Thyroid gland (tissue), 4 donors: ENCODE measurements at regions of chr9 and their contacts with region 1.

Region 1: DNA sequence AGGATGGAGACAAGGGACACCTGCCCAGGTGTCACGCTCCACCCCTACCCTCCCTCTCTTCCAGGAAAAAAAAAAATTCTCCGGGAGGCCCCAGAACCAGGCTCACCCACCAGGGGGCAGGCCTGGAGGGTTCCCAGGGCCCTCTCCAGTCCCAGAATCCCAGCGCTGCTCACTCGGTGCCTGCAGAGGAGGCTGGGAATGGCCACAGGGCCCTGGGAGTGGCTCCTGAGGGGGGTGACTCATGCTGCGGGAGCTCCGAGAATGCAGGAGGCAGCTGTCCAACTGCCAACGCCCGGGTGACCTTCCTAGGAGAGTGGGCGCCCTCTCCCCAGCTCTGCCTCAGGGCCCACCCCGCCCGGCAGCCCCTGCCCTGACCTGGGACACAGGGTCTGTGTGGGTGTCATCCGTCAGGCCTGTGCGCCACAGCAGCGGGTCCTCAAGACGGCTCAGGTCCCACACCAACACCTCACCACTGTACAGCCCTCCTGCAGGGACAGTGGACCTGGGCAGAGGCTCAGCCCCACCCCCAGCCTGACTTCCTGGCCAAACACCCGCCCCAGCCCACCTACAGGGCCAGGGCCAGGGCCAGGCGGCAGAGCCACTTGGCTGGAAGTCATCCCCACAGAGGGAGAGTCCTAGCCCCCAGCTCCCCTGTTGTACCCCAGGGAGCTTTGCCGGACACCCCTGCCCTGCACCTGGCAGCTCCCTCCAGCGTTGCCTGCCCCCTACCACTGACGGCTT is 21.2 kb downstream of the DYNC2I2 start:
- DNase-seq: peak; percentile 99
- H3K4me3 ChIP-seq: no peak overlapping the region
- H3K27ac ChIP-seq: peak overlapping the region; percentile 96 to 99 (median 98)
- H3K4me1 ChIP-seq: peaks cover 27 to 33% of the 10 kb centered on the region in 2 donors
- H3K27me3 ChIP-seq: no peaks in the 10 kb centered on the region
- CTCF ChIP-seq: peak; percentile 64 to 97 (median 88)
- POLR2A ChIP-seq: peak in 1 of 2 donors; percentile 54

Region 2: GRCh38 chr9:128484686-128485413 is 150.6 kb before region 1 on chr9:
- intact Hi-C with region 1: no loop called
- DNase-seq: no peak
- H3K4me3 ChIP-seq: no peak overlapping the region
- H3K27ac ChIP-seq: no peak overlapping the region
- H3K4me1 ChIP-seq: no peaks in the 10 kb centered on the region
- H3K27me3 ChIP-seq: no peaks in the 10 kb centered on the region
- CTCF ChIP-seq: no peak
- POLR2A ChIP-seq: no peak

Region 3: DNA sequence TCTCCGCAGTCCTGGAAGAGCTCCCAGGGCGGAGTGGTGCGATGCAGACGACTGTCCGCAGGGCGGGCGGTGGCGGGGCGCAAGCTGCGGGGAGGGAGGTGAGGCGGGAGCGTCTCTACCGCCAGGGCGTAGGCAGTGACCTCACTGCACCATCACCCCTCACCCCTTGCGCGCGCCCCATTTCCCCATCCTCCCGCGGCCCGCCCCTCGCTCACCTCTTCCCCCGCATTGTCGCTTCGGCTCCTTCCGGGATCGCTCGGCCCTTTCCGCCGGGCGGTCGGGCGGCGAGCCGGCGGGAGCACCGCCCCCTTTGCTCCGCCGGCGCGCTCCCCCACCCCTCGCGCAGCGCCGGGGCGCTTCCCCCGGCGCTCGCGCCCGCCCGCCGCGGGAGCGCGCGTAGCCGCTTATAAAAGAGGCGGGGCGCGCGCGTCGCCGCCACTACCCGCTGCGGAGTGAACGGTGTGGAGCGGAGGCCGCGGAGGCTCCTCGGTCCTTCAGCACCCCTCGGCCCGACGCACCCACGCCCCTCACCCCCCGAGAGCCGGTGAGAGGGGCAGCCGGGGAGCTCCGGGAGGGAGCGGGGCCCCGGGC is 83.2 kb before region 1 on chr9 and contains the start of gene SPTAN1:
- intact Hi-C with region 1: no loop called
- DNase-seq: peak; percentile 83 to 87
- H3K4me3 ChIP-seq: peak within 1 kb of the TSS; percentile 32 to 95 (median 83)
- H3K27ac ChIP-seq: peak within 1 kb of the TSS; percentile 93 to 99 (median 99)
- H3K4me1 ChIP-seq: peaks cover 49 to 56% of the 10 kb centered on the region in 2 donors
- H3K27me3 ChIP-seq: no peaks in the 10 kb centered on the region
- CTCF ChIP-seq: peak in 3 of 6 experiments; percentile 13 to 24 (median 22)
- POLR2A ChIP-seq: peak; percentile 97 to 99
- total RNA-seq, gene SPTAN1: 189 to 307 (median 278) TPM

Region 4: GRCh38 chr9:128688512-128689292 is 53.2 kb after region 1 on chr9 and contains the start of gene SET:
- intact Hi-C with region 1: loop called (anchors 10 kb)
- DNase-seq: peak; percentile 97
- H3K4me3 ChIP-seq: peak within 1 kb of the TSS; percentile 24 to 89 (median 81)
- H3K27ac ChIP-seq: peak within 1 kb of the TSS; percentile 92 to 96 (median 93)
- H3K4me1 ChIP-seq: peaks cover 36 to 44% of the 10 kb centered on the region in 2 donors
- H3K27me3 ChIP-seq: no peaks in the 10 kb centered on the region
- CTCF ChIP-seq: no peak
- POLR2A ChIP-seq: peak; percentile 21 to 98
- total RNA-seq, gene SET: 173 to 217 (median 202) TPM

Region 5: DNA sequence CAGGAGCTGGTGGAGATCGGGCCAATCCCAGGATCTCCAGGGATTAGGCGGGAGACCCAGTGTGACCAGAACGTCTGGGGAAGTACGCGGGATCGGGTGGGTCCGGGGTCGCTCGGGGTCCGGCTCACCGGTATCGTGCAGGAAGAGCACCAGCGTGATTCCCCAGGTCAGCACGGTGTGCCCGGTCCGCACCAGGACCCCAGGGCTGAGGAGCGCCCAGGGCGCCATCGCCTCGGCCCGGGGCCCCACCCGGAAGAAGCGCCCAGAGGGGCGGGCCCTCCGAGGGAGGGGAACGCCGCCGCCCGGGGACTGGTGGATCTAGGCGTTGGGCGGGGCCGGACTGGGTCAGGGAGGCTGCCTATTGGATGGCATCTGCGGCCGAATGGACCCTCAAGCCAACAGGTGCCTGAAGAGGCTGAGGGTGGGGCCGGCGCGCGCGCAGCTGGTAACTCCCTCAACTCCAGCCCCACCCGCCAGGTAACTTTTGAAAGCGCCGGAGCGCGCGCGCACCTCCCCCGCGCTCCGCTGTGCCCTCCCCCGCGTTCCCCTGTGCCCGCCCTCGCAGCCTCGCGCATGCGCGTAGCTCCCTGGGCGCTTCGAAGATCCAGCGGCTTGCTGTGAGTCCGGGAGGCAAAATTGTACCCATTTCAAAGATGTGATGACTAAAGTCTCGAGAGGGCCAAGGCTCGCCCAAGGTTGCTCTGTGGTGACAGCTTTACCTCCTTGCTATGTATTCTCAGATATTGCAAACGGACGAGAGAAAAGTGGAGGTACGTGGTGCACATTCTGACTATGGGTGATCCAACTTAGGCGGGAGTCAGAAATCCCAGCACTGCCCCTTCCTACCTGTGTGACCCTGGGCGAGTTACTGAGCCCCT is 88.7 kb after region 1 on chr9 and contains the start of gene ZDHHC12:
- intact Hi-C with region 1: loop called (anchors 10 kb)
- DNase-seq: peak; percentile 100
- H3K4me3 ChIP-seq: peak within 1 kb of the TSS; percentile 47 to 62 (median 60)
- H3K27ac ChIP-seq: peak within 1 kb of the TSS; percentile 27 to 46 (median 27)
- H3K4me1 ChIP-seq: peaks cover 8 to 16% of the 10 kb centered on the region in 2 donors
- H3K27me3 ChIP-seq: no peaks in the 10 kb centered on the region
- CTCF ChIP-seq: no peak
- POLR2A ChIP-seq: peak in 1 of 2 donors; percentile 73
- total RNA-seq, gene ZDHHC12: 21.2 to 45.7 (median 33.7) TPM